HEK293T (cell line): ENCODE measurements at regions of chr3 and their contacts with region 1.

Region 1: GRCh38 chr3:73502609-73503583 is 121.8 kb downstream of the PDZRN3 start:
- DNase-seq: peak; percentile 70

Region 2: GRCh38 chr3:73100741-73101559 is 401.9 kb before region 1 on chr3:
- CTCF ChIA-PET with region 1: interaction called, 22 read pairs
- POLR2A ChIA-PET with region 1: no interaction called
- DNase-seq: peak; percentile 88